Ascending aorta (tissue), 2 donors: ENCODE measurements at regions of chr17 and their contacts with region 1.

Region 1: DNA sequence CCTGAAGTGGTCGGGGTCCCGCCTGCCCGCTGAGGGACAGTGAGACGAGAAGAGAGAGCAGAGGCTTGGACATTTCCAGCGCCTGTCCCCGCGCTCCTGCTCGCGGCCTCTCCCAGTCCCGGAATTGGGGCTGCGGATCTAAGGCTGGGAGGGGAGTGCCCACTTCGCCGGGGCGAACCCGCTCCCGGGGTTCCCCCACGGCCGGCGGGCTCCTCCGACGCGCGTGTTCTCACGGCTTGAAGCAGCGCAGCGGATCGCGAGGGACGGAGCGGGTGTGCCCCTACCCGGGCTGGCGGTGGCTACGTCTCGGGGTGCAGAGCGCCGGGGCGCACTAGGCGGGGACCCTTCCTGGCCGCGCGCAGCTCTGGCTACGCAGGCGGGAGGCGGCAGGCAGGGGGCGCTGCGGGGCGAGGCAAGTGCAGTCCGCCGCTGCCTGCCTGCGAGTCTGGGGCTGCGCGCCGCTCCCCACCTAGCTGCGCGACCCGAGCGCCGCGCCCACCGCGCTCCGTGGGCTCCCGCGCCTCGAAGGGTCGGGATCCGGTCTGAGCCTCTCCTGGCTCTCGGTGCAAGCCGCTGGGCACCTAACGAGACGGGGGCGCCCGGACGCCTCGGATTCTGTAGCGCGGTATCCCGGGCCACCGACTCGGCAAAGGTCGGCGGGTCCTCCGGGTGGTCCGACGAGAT is 1.2 kb downstream of the NGFR start:
- DNase-seq: peak in 1 of 2 donors; percentile 88
- H3K4me3 ChIP-seq: peak overlapping the region; percentile 66 to 67
- H3K27ac ChIP-seq: no peak overlapping the region
- H3K4me1 ChIP-seq: peaks cover 6 to 29% of the 10 kb centered on the region in 2 donors
- H3K27me3 ChIP-seq: no peaks in the 10 kb centered on the region
- CTCF ChIP-seq: peak; percentile 79 to 93 (median 85)

Region 2: DNA sequence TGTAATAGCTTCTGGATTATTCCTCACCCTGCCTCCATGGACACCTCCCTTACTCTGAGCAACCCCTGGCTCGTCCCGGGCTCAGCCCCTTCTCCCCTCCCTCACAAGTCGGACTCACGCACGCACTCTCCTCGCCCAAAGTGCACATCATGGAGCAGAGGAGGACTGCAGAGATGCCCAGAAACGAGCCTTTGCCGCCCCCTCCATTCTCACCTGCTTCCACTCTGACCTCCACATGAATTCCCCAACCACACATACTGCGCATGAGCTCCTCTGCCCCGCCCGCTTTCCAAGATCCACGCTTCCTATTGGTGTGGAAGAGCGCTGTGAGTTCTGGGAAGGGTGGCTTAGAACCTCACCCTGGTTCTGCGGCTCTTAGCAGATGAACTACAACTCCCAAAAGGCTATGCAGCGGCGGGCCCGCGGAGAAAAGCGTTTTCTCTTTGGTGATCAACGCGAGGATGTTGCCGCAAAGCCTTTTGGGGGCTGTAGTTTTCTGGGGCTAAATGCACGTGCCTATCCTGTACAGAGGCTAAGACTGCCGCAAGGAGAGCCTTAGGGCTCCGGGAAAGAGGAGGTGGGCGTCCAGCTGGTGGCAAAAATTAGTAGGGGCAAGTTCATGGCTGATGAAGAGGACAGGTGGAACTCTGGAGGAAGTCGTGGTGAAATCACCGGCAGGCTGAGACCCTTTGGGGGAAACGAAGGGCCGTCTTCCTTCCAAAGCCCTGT is 81.5 kb before region 1 on chr17 and contains the start of gene PHB1:
- intact Hi-C with region 1: loop called (anchors 5 kb)
- DNase-seq: peak; percentile 89 to 98
- H3K4me3 ChIP-seq: peak within 1 kb of the TSS; percentile 75 to 97
- H3K27ac ChIP-seq: no peak within 1 kb of the TSS
- H3K4me1 ChIP-seq: peaks cover 6 to 8% of the 10 kb centered on the region in 2 donors
- H3K27me3 ChIP-seq: no peaks in the 10 kb centered on the region
- CTCF ChIP-seq: no peak
- total RNA-seq, gene PHB1: 79.6 TPM

Region 3: GRCh38 chr17:49515196-49515770 is 19.0 kb after region 1 on chr17:
- intact Hi-C with region 1: loop called (anchors 1 kb)
- DNase-seq: peak; percentile 71 to 94
- H3K4me3 ChIP-seq: peak overlapping the region in 1 of 2 donors; percentile 4
- H3K27ac ChIP-seq: peak overlapping the region; percentile 84 to 90
- H3K4me1 ChIP-seq: peaks cover 15 to 19% of the 10 kb centered on the region in 2 donors
- H3K27me3 ChIP-seq: peaks cover 3% of the 10 kb centered on the region
- CTCF ChIP-seq: peak; percentile 11 to 42 (median 16)

Region 4: GRCh38 chr17:49548506-49549310 is 52.4 kb after region 1 on chr17:
- intact Hi-C with region 1: loop called (anchors 2 kb)
- DNase-seq: peak in 1 of 2 donors; percentile 65
- H3K4me3 ChIP-seq: no peak overlapping the region
- H3K27ac ChIP-seq: no peak overlapping the region
- H3K4me1 ChIP-seq: no peaks in the 10 kb centered on the region
- H3K27me3 ChIP-seq: no peaks in the 10 kb centered on the region
- CTCF ChIP-seq: peak; percentile 20 to 55 (median 43)

Region 5: DNA sequence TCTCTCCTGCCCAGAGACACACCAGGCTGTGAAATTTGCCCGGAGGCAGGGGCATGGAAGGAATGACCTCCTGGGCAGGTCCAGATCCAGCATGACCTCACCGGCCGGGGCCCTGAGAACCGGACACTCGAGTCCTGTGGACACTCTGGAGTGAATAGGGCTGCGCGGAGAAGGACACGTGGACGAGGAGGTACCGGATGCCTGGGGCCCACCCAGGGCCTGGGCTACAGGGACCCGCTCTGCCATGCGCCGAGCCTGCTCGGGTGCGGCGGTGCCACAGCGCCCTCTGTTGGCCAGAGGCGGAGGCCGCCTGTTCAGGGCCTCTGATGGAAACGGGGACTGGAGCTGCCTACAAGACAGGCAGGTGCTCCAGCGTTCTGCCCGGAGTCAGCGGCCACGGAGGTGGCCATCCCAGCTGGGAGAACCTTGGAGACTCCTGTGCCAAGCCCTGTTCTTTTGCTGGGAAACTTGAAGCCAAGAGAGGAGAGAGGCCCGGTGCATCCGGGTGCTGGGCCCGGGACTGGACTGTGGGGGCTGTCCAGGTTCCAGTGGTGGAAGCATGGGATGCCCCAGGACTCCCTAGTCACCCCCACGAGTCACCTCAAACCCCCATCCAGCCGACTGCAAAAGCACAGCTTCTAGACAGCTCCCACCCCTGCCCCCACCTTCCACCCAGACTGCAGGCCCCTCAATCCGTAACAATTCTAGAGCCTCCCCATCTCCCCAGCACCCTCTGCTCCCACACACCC is 60.1 kb after region 1 on chr17:
- intact Hi-C with region 1: loop called (anchors 1 kb)
- DNase-seq: peak in 1 of 2 donors; percentile 90
- H3K4me3 ChIP-seq: peak overlapping the region in 1 of 2 donors; percentile 11
- H3K27ac ChIP-seq: no peak overlapping the region
- H3K4me1 ChIP-seq: peaks cover 0 to 2% of the 10 kb centered on the region in 2 donors
- H3K27me3 ChIP-seq: no peaks in the 10 kb centered on the region
- CTCF ChIP-seq: peak; percentile 95 to 97 (median 95)

Region 6: GRCh38 chr17:49694847-49695683 is 198.7 kb after region 1 on chr17:
- intact Hi-C with region 1: loop called (anchors 5 kb)
- DNase-seq: no peak
- H3K4me3 ChIP-seq: peak overlapping the region; percentile 8 to 35
- H3K27ac ChIP-seq: peak overlapping the region; percentile 57 to 65
- H3K4me1 ChIP-seq: peaks cover 3 to 31% of the 10 kb centered on the region in 2 donors
- H3K27me3 ChIP-seq: no peaks in the 10 kb centered on the region
- CTCF ChIP-seq: peak; percentile 92 to 95 (median 95)